GM12878 (cell line): ENCODE measurements at regions of chr19 and their contacts with region 1.

Region 1: DNA sequence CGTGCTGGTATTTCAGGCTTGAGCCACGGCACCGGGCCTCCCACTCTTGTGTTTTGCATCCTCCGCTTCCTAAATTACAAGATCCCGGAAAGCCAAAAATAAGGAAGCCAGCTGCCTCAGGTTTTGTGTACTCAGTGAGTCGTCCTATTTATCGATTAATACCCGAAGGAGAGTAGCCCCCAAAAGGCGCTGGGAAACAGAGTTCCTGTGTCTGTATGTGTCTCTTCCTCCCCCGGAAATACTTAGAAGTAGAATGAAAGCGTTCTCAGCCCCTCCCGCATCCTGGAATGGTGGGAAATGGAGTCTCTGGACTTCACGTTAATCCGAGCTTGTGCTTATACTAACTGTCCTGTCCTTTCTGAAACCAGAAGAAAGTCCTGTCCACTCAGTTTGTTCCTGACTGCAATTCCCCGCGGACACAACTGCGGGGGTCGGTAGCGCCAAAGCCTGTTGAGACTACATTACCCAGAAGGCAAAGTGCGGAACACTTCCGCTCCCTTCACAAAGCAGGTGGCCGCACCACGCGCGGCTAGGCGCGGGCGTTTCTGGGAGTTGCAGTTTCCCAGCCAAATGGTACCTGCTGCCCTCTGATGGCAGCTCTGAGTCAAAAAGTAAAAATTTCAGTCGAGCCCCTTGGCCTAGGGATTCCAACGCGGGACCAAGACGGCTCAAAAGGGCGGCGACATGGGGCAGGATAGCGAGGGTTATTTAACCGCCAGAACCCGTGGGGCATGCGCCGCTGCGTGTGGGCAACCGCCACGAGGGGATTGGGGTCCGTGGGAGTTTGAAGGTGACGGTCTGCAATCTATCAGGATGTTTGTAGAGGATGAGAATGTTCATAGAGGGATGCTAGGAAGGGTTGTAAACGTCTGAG is 2.2 kb upstream of the GSK3A start:
- DNase-seq: peak; percentile 85
- ATAC-seq: peak; percentile 65
- H3K4me3 ChIP-seq: peak overlapping the region; percentile 90
- H3K27ac ChIP-seq: peak overlapping the region; percentile 85
- H3K4me1 ChIP-seq: peaks cover 17% of the 10 kb centered on the region
- H3K27me3 ChIP-seq: no peaks in the 10 kb centered on the region
- CTCF ChIP-seq: peak; percentile 59 to 83 (median 68); a peak in 5 of 6 replicates
- EP300 ChIP-seq: no peak
- POLR2A ChIP-seq: peak; percentile 63
- RAD21 ChIP-seq: peak; percentile 40; the same call in 1 of the 2 replicates

Region 2: GRCh38 chr19:42108527-42109389 is 135.8 kb before region 1 on chr19:
- CTCF ChIA-PET with region 1: interaction called, 8 read pairs
- POLR2A ChIA-PET with region 1: interaction called, 18 read pairs
- RAD21 ChIA-PET with region 1: interaction called, 10 read pairs
- SMC1A ChIA-PET with region 1: interaction called, 5 read pairs
- in situ Hi-C with region 1: no loop called
- intact Hi-C with region 1: no loop called
- DNase-seq: peak; percentile 72
- ATAC-seq: peak; percentile 99
- H3K4me3 ChIP-seq: no peak overlapping the region
- H3K27ac ChIP-seq: no peak overlapping the region
- H3K4me1 ChIP-seq: peaks cover 31% of the 10 kb centered on the region
- H3K27me3 ChIP-seq: no peaks in the 10 kb centered on the region
- CTCF ChIP-seq: peak; percentile 100; a peak in 5 of 6 replicates
- EP300 ChIP-seq: no peak; a peak in 1 of 4 replicates
- POLR2A ChIP-seq: no peak
- RAD21 ChIP-seq: peak; percentile 100

Region 3: GRCh38 chr19:42132851-42133528 is 111.6 kb before region 1 on chr19:
- CTCF ChIA-PET with region 1: interaction called, 10 read pairs
- POLR2A ChIA-PET with region 1: interaction called, 8 read pairs
- RAD21 ChIA-PET with region 1: interaction called, 25 read pairs
- SMC1A ChIA-PET with region 1: interaction called, 7 read pairs
- in situ Hi-C with region 1: no loop called
- intact Hi-C with region 1: loop called (anchors 5 kb)
- DNase-seq: peak; percentile 33
- ATAC-seq: peak; percentile 55
- H3K4me3 ChIP-seq: peak overlapping the region; percentile 99
- H3K27ac ChIP-seq: peak overlapping the region; percentile 99
- H3K4me1 ChIP-seq: peaks cover 27% of the 10 kb centered on the region
- H3K27me3 ChIP-seq: no peaks in the 10 kb centered on the region
- CTCF ChIP-seq: peak; percentile 76 to 99 (median 92); a peak in 5 of 6 replicates
- EP300 ChIP-seq: no peak
- POLR2A ChIP-seq: peak; percentile 61
- RAD21 ChIP-seq: peak; percentile 90

Region 4: GRCh38 chr19:42219812-42220750 is 24.5 kb before region 1 on chr19 and contains the start of gene ZNF526:
- CTCF ChIA-PET with region 1: interaction called, 5 read pairs
- POLR2A ChIA-PET with region 1: interaction called, 37 read pairs
- RAD21 ChIA-PET with region 1: interaction called, 23 read pairs
- SMC1A ChIA-PET with region 1: interaction called, 6 read pairs
- in situ Hi-C with region 1: no loop called
- intact Hi-C with region 1: loop called (anchors 2 kb)
- DNase-seq: peak; percentile 95
- ATAC-seq: peak; percentile 93
- H3K4me3 ChIP-seq: peak within 1 kb of the TSS; percentile 97
- H3K27ac ChIP-seq: peak within 1 kb of the TSS; percentile 83
- H3K4me1 ChIP-seq: peaks cover 18% of the 10 kb centered on the region
- H3K27me3 ChIP-seq: no peaks in the 10 kb centered on the region
- CTCF ChIP-seq: no peak
- EP300 ChIP-seq: no peak
- POLR2A ChIP-seq: peak; percentile 91
- RAD21 ChIP-seq: no peak
- polyA plus RNA-seq, gene ZNF526: 1.8 to 2.0 TPM

Region 5: GRCh38 chr19:42268704-42269477 is 24.3 kb after region 1 on chr19 and contains the start of gene CIC:
- CTCF ChIA-PET with region 1: interaction called, 11 read pairs
- POLR2A ChIA-PET with region 1: interaction called, 19 read pairs
- RAD21 ChIA-PET with region 1: interaction called, 12 read pairs
- SMC1A ChIA-PET with region 1: interaction called, 8 read pairs
- in situ Hi-C with region 1: no loop called
- intact Hi-C with region 1: loop called (anchors 1 kb)
- DNase-seq: peak; percentile 100
- ATAC-seq: peak; percentile 90
- H3K4me3 ChIP-seq: peak within 1 kb of the TSS; percentile 91
- H3K27ac ChIP-seq: peak within 1 kb of the TSS; percentile 100
- H3K4me1 ChIP-seq: peaks cover 15% of the 10 kb centered on the region
- H3K27me3 ChIP-seq: no peaks in the 10 kb centered on the region
- CTCF ChIP-seq: no peak
- EP300 ChIP-seq: no peak
- POLR2A ChIP-seq: peak; percentile 50; the same call in 1 of the 2 replicates
- RAD21 ChIP-seq: no peak
- polyA plus RNA-seq, gene CIC: 0.18 to 0.24 TPM

Region 6: DNA sequence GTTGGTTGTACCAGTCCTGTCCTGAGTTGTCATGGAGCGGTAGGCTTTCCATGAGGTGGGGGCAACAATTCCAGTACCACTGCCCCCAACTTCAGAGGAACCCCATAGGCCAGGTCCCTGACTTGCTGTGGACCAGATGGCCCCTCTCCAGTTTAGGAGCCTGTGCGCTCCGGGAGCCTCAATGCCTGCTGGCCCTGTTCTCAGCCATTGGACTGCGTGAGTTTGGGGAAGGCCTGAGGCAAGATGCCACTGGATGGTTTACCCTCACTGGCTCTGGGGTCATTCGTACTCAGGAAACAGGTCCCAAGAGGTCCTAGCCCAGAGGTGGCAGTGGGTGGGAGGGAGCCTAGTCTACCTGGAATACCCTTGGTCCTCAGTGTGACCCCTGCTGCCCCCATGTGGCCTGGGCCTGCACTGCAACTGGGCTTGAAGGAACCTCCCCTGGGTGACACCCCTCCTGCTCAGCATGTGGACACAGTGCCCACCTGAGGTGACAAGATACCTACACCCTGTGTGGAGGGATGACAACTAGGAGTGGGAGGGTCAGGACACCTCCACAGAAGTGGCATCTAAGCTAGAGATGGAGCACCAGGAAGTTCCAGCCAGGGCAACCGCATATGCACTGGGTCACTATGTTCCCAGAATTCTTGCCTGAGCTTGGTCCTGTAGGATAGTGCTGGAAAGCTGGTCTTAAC is 51.4 kb after region 1 on chr19:
- CTCF ChIA-PET with region 1: interaction called, 25 read pairs
- POLR2A ChIA-PET with region 1: no interaction called
- RAD21 ChIA-PET with region 1: interaction called, 3 read pairs
- SMC1A ChIA-PET with region 1: interaction called, 8 read pairs
- in situ Hi-C with region 1: no loop called
- intact Hi-C with region 1: no loop called
- DNase-seq: peak; percentile 41
- ATAC-seq: peak; percentile 96
- H3K4me3 ChIP-seq: no peak overlapping the region
- H3K27ac ChIP-seq: no peak overlapping the region
- H3K4me1 ChIP-seq: no peaks in the 10 kb centered on the region; the same call in 1 of the 2 replicates
- H3K27me3 ChIP-seq: no peaks in the 10 kb centered on the region
- CTCF ChIP-seq: peak; percentile 97 to 99 (median 99)
- EP300 ChIP-seq: no peak
- POLR2A ChIP-seq: peak; percentile 71
- RAD21 ChIP-seq: peak; percentile 74